BJ (cell line): ENCODE measurements at regions of chr10 and their contacts with region 1.

Region 1: DNA sequence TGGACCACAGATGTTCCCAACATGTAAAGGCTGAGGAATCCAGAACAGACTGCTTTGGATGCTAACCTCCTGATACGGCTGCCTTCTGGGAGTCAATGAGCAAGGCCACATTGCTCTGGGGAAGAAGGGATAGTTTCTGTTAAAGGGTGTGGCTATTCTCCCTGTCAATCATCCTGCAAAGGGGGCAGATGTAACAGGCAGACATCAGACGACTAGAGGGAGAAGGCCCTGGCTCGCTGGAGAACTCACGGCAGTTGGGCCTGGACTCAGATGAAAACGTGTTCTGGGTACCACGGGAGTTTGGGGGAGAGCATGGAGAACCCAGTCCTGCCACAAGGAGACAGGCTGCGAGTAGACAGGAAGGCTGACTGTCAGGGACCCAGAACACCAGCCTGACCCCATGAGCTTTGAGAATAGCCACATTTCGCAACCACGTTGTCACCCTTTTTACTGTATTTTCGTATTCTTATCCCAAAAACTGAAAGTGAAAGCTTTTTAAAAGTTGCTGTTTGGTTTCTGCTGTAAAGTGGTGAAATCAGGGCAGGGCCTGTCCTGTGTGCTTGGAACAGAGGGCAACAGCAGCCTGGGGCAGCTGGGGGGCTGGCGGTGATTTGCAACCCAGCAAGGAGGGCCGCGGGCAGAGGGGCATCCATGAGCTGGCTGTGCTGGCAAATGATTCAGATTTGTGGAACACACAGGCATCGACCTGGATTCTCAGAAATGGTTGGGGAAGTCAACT is 95.3 kb downstream of the MYOF start:
- DNase-seq: no peak
- H3K4me3 ChIP-seq: no peak overlapping the region
- H3K27me3 ChIP-seq: no peaks in the 10 kb centered on the region
- CTCF ChIP-seq: peak; percentile 37

Region 2: GRCh38 chr10:93403152-93404041 is 16.6 kb after region 1 on chr10:
- CTCF ChIA-PET with region 1: interaction called, 10 read pairs
- POLR2A ChIA-PET with region 1: no interaction called
- DNase-seq: no peak
- H3K4me3 ChIP-seq: no peak overlapping the region
- H3K27me3 ChIP-seq: no peaks in the 10 kb centered on the region
- CTCF ChIP-seq: no peak

Region 3: DNA sequence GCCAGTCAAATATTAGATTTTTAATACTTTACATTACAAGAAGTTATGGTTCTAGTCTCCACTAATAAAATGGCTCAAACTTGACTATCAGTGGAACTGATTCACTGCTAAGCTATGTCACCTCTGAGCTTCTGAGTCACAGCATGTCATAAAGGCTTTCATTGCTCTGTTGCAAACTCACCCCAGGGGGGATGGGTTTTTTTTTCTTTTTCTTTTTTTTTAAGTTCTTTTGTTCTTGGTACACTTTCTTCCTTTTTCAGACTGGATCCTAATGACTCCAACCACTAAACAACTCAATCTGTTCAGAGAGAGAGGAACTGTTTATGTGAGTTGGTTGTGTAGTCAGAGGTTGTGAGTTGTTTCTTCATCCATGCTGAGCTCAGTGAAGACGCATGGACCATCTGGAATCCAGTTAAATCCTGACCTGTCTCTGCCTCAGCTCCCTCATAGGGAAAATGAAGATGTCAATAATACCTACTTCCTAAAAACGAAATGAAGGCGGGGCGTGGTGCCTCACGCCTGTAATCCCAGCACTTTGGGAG is 84.4 kb after region 1 on chr10:
- CTCF ChIA-PET with region 1: interaction called, 3 read pairs
- POLR2A ChIA-PET with region 1: interaction called, 17 read pairs
- DNase-seq: peak; percentile 98
- H3K4me3 ChIP-seq: no peak overlapping the region
- H3K27me3 ChIP-seq: no peaks in the 10 kb centered on the region
- CTCF ChIP-seq: no peak